ENCODE measurements at regions of chr10 and their contacts with region 1.

Region 1: GRCh38 chr10:58556516-58557165 is 44.0 kb downstream of the BICC1 start:
- DNase-seq: no peak
- ATAC-seq: no peak
- H3K4me3 ChIP-seq: no peak overlapping the region
- H3K27ac ChIP-seq: no peak overlapping the region
- H3K4me1 ChIP-seq: peaks cover 2% of the 10 kb centered on the region; the same call in 1 of the 2 replicates
- H3K27me3 ChIP-seq: no peaks in the 10 kb centered on the region
- CTCF ChIP-seq: no peak
- POLR2A ChIP-seq: no peak
- RAD21 ChIP-seq: no peak

Region 2: GRCh38 chr10:58573144-58573543 is 16.5 kb after region 1 on chr10:
- CTCF ChIA-PET with region 1: no interaction called
- POLR2A ChIA-PET with region 1: no interaction called
- dilution Hi-C with region 1: no loop called
- in situ Hi-C with region 1: no loop called
- intact Hi-C with region 1: loop called (anchors 2 kb)
- DNase-seq: no peak
- ATAC-seq: no peak
- H3K4me3 ChIP-seq: no peak overlapping the region
- H3K27ac ChIP-seq: no peak overlapping the region
- H3K4me1 ChIP-seq: peaks cover 12% of the 10 kb centered on the region
- H3K27me3 ChIP-seq: no peaks in the 10 kb centered on the region
- CTCF ChIP-seq: no peak
- POLR2A ChIP-seq: no peak
- RAD21 ChIP-seq: no peak

Measured in IMR-90 (cell line).